MCF 10A (cell line): ENCODE measurements at regions of chr1 and their contacts with region 1.

Region 1: GRCh38 chr1:117367047-117368018 is at the start of gene MAN1A2:
- DNase-seq: peak; percentile 84
- H3K4me3 Mint-ChIP-seq: peak within 1 kb of the TSS; percentile 91
- H3K27ac Mint-ChIP-seq: peak within 1 kb of the TSS; percentile 83
- H3K4me1 Mint-ChIP-seq: peaks cover 25% of the 10 kb centered on the region
- H3K27me3 Mint-ChIP-seq: no peaks in the 10 kb centered on the region
- CTCF ChIP-seq: no peak
- total RNA-seq, gene MAN1A2: 32.0 and 33.4 TPM in 2 replicates

Region 2: DNA sequence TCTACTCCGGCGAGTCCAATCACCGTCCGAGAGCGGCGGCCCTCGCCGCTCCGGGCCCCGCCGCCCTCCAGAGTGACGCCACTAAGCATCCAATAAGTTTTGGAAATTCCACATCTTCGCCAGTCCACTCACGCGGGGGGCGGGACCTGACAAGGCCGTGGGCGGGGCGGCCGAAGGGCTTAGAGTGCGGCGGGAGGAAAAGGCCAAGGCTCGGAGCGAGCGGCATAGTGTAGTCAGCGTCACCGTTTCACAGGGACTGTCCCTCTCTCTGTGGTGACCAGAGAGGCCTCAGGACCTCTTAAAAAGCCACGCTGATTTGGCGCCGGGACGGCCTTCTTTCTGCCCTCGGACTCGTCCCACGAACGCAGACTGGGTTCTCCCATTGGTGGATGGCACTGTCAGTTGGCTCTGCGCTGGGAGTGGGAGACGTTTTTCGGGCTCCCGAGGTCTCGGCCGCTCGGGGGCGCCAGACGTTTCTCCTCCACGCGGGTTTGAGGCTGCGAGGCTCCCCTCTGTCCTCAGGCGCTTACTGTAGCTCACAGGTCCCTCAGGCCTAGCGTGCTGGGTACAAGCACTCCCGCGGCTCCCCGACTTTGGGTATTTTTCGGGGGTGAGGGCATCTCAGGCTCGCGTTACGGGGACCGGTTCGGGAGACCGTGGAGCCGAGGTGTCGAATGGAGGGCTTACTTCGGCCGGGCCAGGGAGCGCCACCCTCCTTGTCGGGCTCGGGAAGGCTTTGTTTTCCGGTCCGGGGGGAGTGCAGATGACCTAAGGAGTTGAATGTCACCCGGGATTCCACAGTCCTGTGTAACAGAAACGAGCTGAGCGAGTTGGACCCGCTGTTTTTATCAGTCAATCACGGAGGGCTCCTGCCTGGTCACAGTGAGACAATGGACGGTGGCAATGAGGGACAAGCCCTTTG is 245.3 kb before region 1 on chr1:
- CTCF ChIA-PET with region 1: no interaction called
- POLR2A ChIA-PET with region 1: no interaction called
- intact Hi-C with region 1: loop called (anchors 10 kb)
- DNase-seq: peak; percentile 95
- H3K4me3 Mint-ChIP-seq: peak overlapping the region; percentile 84
- H3K27ac Mint-ChIP-seq: peak overlapping the region; percentile 86
- H3K4me1 Mint-ChIP-seq: no peaks in the 10 kb centered on the region
- H3K27me3 Mint-ChIP-seq: no peaks in the 10 kb centered on the region
- CTCF ChIP-seq: peak; percentile 37

Region 3: GRCh38 chr1:117312225-117313138 is 54.9 kb before region 1 on chr1:
- CTCF ChIA-PET with region 1: interaction called, 3 read pairs
- POLR2A ChIA-PET with region 1: no interaction called
- intact Hi-C with region 1: loop called (anchors 5 kb)
- DNase-seq: peak; percentile 62
- H3K4me3 Mint-ChIP-seq: no peak overlapping the region
- H3K27ac Mint-ChIP-seq: no peak overlapping the region
- H3K4me1 Mint-ChIP-seq: no peaks in the 10 kb centered on the region
- H3K27me3 Mint-ChIP-seq: no peaks in the 10 kb centered on the region
- CTCF ChIP-seq: peak; percentile 49

Region 4: DNA sequence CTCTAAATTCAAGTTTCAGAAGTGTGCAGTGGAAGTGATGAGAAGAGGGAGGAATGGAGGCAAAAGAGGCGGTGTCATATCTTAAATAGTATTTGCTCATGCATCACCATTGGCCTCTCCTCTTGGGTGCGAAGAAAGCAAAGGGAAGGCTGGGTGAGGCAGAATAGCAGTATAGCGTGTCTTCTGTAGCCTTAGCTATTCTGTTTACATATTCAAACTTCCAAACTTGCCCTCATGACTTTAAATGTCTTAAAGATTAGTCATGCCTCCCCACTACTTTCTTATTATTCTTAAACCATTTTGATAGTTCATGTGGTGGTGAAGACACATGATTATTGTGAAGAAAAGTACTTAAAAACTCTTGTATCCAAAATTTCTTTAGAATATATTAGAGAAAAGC is 133.9 kb after region 1 on chr1:
- CTCF ChIA-PET with region 1: no interaction called
- POLR2A ChIA-PET with region 1: no interaction called
- intact Hi-C with region 1: loop called (anchors 10 kb)
- DNase-seq: no peak
- H3K4me3 Mint-ChIP-seq: no peak overlapping the region
- H3K27ac Mint-ChIP-seq: no peak overlapping the region
- H3K4me1 Mint-ChIP-seq: no peaks in the 10 kb centered on the region
- H3K27me3 Mint-ChIP-seq: no peaks in the 10 kb centered on the region
- CTCF ChIP-seq: no peak